CD8-positive, alpha-beta T cell (primary cell): ENCODE measurements at regions of chr16 and their contacts with region 1.

Region 1: GRCh38 chr16:12067714-12068401 is 91.3 kb downstream of the SNX29 start:
- DNase-seq: peak in 8 of 9 experiments; percentile 38 to 80 (median 56)
- ATAC-seq: peak; percentile 96
- H3K4me3 ChIP-seq: no peak overlapping the region
- H3K4me3 Mint-ChIP-seq: no peak overlapping the region
- H3K27ac ChIP-seq: no peak overlapping the region
- H3K27ac Mint-ChIP-seq: no peak overlapping the region
- H3K4me1 ChIP-seq: no peaks in the 10 kb centered on the region
- H3K4me1 Mint-ChIP-seq: peaks cover 4% of the 10 kb centered on the region
- H3K27me3 ChIP-seq: no peaks in the 10 kb centered on the region
- H3K27me3 Mint-ChIP-seq: no peaks in the 10 kb centered on the region
- CTCF ChIP-seq: peak; percentile 85

Region 2: GRCh38 chr16:11396241-11397048 is 671.4 kb before region 1 on chr16:
- CTCF ChIA-PET with region 1: interaction called, 11 read pairs
- POLR2A ChIA-PET with region 1: no interaction called
- intact Hi-C with region 1: loop called (anchors 1 to 5 kb)
- DNase-seq: peak; percentile 46 to 78 (median 65)
- ATAC-seq: peak; percentile 85
- H3K4me3 ChIP-seq: no peak overlapping the region
- H3K4me3 Mint-ChIP-seq: no peak overlapping the region
- H3K27ac ChIP-seq: no peak overlapping the region
- H3K27ac Mint-ChIP-seq: no peak overlapping the region
- H3K4me1 ChIP-seq: no peaks in the 10 kb centered on the region
- H3K4me1 Mint-ChIP-seq: no peaks in the 10 kb centered on the region
- H3K27me3 ChIP-seq: no peaks in the 10 kb centered on the region
- H3K27me3 Mint-ChIP-seq: no peaks in the 10 kb centered on the region
- CTCF ChIP-seq: peak; percentile 99

Region 3: GRCh38 chr16:11851294-11852091 is 216.4 kb before region 1 on chr16 and contains the start of gene RSL1D1:
- CTCF ChIA-PET with region 1: interaction called, 5 read pairs
- POLR2A ChIA-PET with region 1: interaction called, 4 read pairs
- intact Hi-C with region 1: loop called in 1 of 2 experiments (anchors 5 kb)
- DNase-seq: peak; percentile 89 to 98 (median 93)
- ATAC-seq: peak; percentile 79
- H3K4me3 ChIP-seq: peak within 1 kb of the TSS; percentile 99
- H3K4me3 Mint-ChIP-seq: peak within 1 kb of the TSS; percentile 93
- H3K27ac ChIP-seq: peak within 1 kb of the TSS; percentile 92 to 95
- H3K27ac Mint-ChIP-seq: peak within 1 kb of the TSS; percentile 96
- H3K4me1 ChIP-seq: peaks cover 48% of the 10 kb centered on the region
- H3K4me1 Mint-ChIP-seq: peaks cover 57% of the 10 kb centered on the region
- H3K27me3 ChIP-seq: no peaks in the 10 kb centered on the region
- H3K27me3 Mint-ChIP-seq: no peaks in the 10 kb centered on the region
- CTCF ChIP-seq: no peak
- total RNA-seq, gene RSL1D1: 235 to 242 TPM

Region 4: DNA sequence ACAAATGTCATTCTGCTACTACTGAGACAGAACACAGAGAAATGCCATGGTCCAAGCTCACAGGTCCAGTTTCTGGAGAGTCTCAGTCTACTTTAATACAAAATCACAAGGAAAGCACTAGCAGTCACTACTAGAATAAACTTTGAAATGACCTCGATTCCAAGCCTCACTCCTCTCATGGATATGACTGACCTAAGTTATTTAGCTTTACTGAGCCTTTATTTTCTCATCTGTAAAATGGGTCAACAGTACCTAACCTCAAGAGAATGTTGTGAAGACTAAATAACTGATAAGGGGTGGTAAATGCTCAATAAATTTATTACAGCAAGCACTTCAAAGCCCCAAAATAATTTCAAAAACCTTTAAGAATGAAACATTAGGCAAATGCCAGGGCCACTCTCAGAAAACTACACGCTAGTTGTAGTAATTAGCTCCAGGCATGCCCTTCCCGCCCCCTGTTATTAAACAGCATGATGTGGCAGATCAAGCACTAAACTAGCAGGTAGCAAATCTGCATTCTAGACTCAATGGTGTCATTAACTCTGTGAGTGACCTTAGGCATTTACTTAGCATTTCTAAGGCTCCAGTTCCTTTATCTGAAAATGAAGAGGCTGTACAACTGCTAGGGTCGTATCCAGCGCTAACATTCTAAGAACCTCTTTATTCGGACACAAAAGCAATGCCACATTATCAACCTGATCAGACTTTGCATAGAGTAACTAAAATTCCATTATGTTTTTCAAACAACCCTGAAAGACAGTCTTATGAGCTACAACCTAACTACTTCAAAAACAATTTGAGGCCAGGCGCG is 160.5 kb before region 1 on chr16:
- CTCF ChIA-PET with region 1: no interaction called
- POLR2A ChIA-PET with region 1: no interaction called
- intact Hi-C with region 1: no loop called
- DNase-seq: no peak
- ATAC-seq: no peak
- H3K4me3 ChIP-seq: no peak overlapping the region
- H3K4me3 Mint-ChIP-seq: no peak overlapping the region
- H3K27ac ChIP-seq: no peak overlapping the region
- H3K27ac Mint-ChIP-seq: no peak overlapping the region
- H3K4me1 ChIP-seq: peaks cover 41% of the 10 kb centered on the region
- H3K4me1 Mint-ChIP-seq: peaks cover 71% of the 10 kb centered on the region
- H3K27me3 ChIP-seq: no peaks in the 10 kb centered on the region
- H3K27me3 Mint-ChIP-seq: no peaks in the 10 kb centered on the region
- CTCF ChIP-seq: no peak

Region 5: DNA sequence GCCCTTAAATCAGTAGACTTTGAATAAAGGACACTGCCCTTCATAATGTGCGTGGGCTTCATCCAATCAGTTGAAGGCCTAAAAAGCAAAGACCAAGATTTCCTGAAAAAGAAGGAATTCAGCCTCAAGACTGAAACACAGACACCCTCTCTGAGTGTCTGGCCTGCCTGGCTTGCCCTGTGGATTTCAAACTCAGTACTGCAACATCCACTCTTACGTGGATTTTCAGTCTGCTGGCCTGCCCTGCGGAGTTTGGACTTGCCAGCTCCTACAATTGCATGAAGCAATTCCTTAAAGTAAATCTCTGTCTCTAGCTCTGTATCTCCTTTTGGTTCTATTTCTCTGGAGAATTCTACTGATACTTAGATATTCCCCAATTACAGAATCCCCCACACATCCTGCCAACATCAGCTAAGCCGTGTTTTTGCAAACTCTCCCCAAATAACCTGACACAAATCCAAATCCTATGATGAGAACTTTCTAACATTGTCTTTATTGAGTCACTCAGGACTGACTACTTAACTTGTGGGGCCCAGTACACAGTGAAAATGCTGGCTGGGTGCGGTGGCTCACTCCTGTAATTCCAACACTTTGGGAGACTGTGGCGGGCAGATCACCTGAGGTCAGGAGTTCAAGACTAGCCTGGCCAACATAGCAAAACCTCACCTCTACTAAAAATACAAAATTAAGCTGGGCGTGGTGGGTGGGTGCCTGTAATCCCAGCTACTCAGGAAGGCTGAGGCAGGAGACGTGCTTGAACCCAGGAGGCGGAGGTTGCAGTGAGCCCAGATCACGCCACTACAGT is 110.1 kb before region 1 on chr16:
- CTCF ChIA-PET with region 1: interaction called, 11 read pairs
- POLR2A ChIA-PET with region 1: interaction called, 3 read pairs
- intact Hi-C with region 1: no loop called
- DNase-seq: no peak
- ATAC-seq: no peak
- H3K4me3 ChIP-seq: no peak overlapping the region
- H3K4me3 Mint-ChIP-seq: no peak overlapping the region
- H3K27ac ChIP-seq: no peak overlapping the region
- H3K27ac Mint-ChIP-seq: no peak overlapping the region
- H3K4me1 ChIP-seq: no peaks in the 10 kb centered on the region
- H3K4me1 Mint-ChIP-seq: no peaks in the 10 kb centered on the region
- H3K27me3 ChIP-seq: no peaks in the 10 kb centered on the region
- H3K27me3 Mint-ChIP-seq: peaks cover 5% of the 10 kb centered on the region
- CTCF ChIP-seq: no peak

Region 6: GRCh38 chr16:12079412-12079965 is 11.6 kb after region 1 on chr16:
- CTCF ChIA-PET with region 1: interaction called, 33 read pairs
- POLR2A ChIA-PET with region 1: interaction called, 4 read pairs
- intact Hi-C with region 1: no loop called
- DNase-seq: peak in 3 of 9 experiments; percentile 4 to 59 (median 21)
- ATAC-seq: peak; percentile 9
- H3K4me3 ChIP-seq: peak overlapping the region; percentile 12 to 13
- H3K4me3 Mint-ChIP-seq: peak overlapping the region; percentile 65
- H3K27ac ChIP-seq: peak overlapping the region; percentile 55 to 88
- H3K27ac Mint-ChIP-seq: peak overlapping the region; percentile 93
- H3K4me1 ChIP-seq: peaks cover 72% of the 10 kb centered on the region
- H3K4me1 Mint-ChIP-seq: peaks cover 77% of the 10 kb centered on the region
- H3K27me3 ChIP-seq: no peaks in the 10 kb centered on the region
- H3K27me3 Mint-ChIP-seq: no peaks in the 10 kb centered on the region
- CTCF ChIP-seq: no peak